ENCODE measurements at regions of chr5 and their contacts with region 1.

Region 1: DNA sequence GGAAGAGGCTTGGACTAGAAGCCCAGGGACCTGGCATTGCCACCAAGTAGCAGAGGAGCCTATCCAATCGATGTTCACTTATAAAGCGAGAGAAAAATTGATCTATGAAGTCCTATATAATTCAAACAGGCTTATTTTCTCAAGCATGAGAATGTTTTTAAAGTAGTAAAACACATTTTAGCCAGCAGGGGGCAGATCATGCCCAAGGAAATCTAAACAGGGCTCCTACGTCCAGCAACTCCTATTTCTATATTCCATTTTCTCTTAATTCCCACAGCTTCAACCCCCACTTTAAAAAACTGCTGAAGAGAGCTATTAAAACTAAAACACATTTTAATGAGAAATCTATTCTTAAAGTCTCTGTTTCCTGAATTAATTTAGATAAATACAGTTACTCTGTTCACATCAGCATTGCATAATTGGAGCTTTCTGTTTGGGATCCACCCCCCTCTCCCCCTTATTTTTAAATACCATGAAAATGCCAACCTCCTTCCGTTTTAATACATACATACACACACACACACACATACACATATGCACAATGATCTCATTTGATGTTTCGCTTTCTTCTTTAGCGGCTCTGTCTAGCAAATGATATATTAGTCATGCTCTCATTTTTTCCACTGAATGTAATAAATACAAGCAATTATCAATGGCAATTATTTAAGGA is 144.9 kb downstream of the MYO10 start:
- DNase-seq: peak in 1 of 2 donors; percentile 29
- H3K4me3 ChIP-seq: no peak overlapping the region
- H3K27ac ChIP-seq: no peak overlapping the region
- H3K4me1 ChIP-seq: peaks cover 0 to 7% of the 10 kb centered on the region in 2 donors
- H3K27me3 ChIP-seq: no peaks in the 10 kb centered on the region
- CTCF ChIP-seq: peak; percentile 60 to 82 (median 66)
- POLR2A ChIP-seq: no peak

Region 2: DNA sequence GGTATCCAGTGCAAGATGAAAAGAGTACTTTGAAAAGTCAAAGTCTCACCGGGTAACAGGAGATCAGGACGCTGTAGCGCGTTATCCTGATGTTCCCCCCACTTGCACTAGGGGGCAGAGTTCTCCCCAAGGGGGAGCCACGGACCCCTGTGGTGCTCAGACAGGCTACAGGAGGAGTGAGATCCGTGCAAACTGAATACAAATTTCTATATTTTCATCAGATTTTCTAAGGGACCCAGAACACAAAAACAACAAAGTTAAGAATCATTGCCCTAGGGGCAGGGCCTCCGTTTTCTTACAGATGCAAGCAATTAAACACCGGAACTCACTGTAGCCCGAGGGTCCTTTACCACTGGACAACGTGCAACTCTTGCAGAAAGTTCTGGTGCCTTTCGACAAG is 143.0 kb after region 1 on chr5:
- intact Hi-C with region 1: loop called (anchors 10 kb)
- DNase-seq: peak; percentile 74 to 81
- H3K4me3 ChIP-seq: peak overlapping the region in 2 of 3 donors; percentile 42 to 83
- H3K27ac ChIP-seq: peak overlapping the region in 2 of 3 donors; percentile 88 to 94
- H3K4me1 ChIP-seq: peaks cover 33 to 36% of the 10 kb centered on the region in 2 donors
- H3K27me3 ChIP-seq: no peaks in the 10 kb centered on the region
- CTCF ChIP-seq: peak; percentile 68 to 86 (median 82)
- POLR2A ChIP-seq: no peak

Measured in thyroid gland (tissue), 4 donors.